ENCODE measurements at regions of chr1 and their contacts with region 1.

Region 1: DNA sequence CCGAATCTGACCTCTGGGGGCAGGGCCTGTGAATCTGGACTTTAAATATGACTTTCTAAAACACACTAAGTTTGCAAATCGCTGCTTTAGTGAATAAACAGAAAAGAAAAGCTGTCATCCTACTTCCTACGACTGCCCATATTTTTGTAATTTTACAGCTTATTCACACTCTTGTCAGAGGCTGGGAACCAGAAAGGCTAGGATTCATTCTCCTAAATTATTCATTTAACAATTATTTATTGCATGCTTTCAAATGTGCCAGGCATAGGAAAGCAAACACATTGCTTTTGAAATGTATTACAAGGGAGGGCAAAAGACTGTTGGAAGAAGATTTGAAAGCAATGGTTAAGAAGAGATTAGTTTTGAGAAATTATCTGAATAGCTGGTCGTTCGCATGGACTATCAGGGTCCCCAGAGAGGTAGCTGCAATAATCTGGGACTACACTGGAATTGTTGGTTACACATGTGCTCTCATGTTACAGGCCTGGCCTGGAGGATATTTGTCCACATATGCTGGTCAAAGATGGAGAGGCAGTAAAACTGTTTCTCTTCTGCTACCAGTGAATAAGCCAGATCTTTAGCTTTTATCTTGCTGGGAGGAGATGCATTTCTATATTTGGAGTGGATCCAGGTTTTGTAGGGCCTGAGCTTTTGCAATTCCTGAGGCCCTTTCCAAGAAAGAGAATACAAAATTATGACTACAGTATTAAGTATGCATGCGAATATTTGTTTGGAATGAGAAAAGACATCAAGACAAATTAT is 29.6 kb upstream of the SFPQ start:
- DNase-seq: peak; percentile 25
- H3K4me3 ChIP-seq: no peak overlapping the region
- H3K27ac ChIP-seq: peak overlapping the region; percentile 56 to 67
- H3K4me1 ChIP-seq: peaks cover 0 to 19% of the 10 kb centered on the region in 2 experiments; a peak in 1 of 4 replicates
- H3K27me3 ChIP-seq: no peaks in the 10 kb centered on the region
- CTCF ChIP-seq: no peak
- EP300 ChIP-seq: peak; percentile 15 to 65; a peak in 1 of 4 replicates
- RAD21 ChIP-seq: no peak

Region 2: GRCh38 chr1:35202048-35202719 is 20.3 kb before region 1 on chr1:
- CTCF ChIA-PET with region 1: interaction called, 10 read pairs
- POLR2A ChIA-PET with region 1: no interaction called
- DNase-seq: peak; percentile 72
- H3K4me3 ChIP-seq: peak overlapping the region; percentile 10 to 39; a peak in 2 of 4 replicates
- H3K27ac ChIP-seq: peak overlapping the region in 1 of 2 experiments; percentile 43; a peak in 1 of 4 replicates
- H3K4me1 ChIP-seq: peaks cover 0 to 3% of the 10 kb centered on the region in 2 experiments; a peak in 2 of 4 replicates
- H3K27me3 ChIP-seq: no peaks in the 10 kb centered on the region
- CTCF ChIP-seq: peak; percentile 88
- EP300 ChIP-seq: no peak
- RAD21 ChIP-seq: peak; percentile 81

Region 3: DNA sequence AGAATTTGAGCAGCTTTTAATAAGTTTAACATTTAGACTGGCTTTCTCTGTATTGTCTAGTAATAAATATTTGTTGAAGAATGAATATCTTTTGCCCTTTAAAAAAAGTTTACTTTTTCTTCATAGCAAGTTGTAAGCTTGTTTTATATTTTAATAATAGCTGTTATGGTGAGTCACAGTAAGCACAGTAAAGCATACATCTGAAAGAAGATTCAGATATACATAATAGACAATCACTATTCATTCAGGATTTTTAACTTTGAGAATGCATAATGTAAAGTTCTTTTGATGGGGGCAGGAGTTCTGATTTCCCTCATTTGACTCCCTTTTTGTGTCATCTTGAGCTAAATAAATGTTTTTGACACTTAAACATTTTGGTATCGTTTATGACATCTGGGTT is 112.0 kb after region 1 on chr1:
- CTCF ChIA-PET with region 1: no interaction called
- POLR2A ChIA-PET with region 1: no interaction called
- DNase-seq: no peak
- H3K4me3 ChIP-seq: no peak overlapping the region
- H3K27ac ChIP-seq: no peak overlapping the region
- H3K4me1 ChIP-seq: no peaks in the 10 kb centered on the region
- H3K27me3 ChIP-seq: no peaks in the 10 kb centered on the region
- CTCF ChIP-seq: no peak
- EP300 ChIP-seq: no peak
- RAD21 ChIP-seq: no peak